Gastrocnemius medialis (tissue), 4 donors: ENCODE measurements at regions of chr18 and their contacts with region 1.

Region 1: GRCh38 chr18:63155169-63155852 is 164.3 kb downstream of the BCL2 start:
- DNase-seq: peak; percentile 58 to 77
- ATAC-seq: peak; percentile 71 to 92
- H3K4me3 ChIP-seq: peak overlapping the region; percentile 15 to 42 (median 31)
- H3K27ac ChIP-seq: peak overlapping the region in 3 of 4 donors; percentile 60 to 82 (median 63)
- H3K4me1 ChIP-seq: peaks cover 27 to 34% of the 10 kb centered on the region in 2 donors
- H3K27me3 ChIP-seq: no peaks in the 10 kb centered on the region
- CTCF ChIP-seq: peak; percentile 76 to 85 (median 80)
- POLR2A ChIP-seq: no peak

Region 2: GRCh38 chr18:62832282-62832681 is 323.0 kb before region 1 on chr18:
- in situ Hi-C with region 1: no loop called
- intact Hi-C with region 1: no loop called
- DNase-seq: no peak
- ATAC-seq: no peak
- H3K4me3 ChIP-seq: no peak overlapping the region
- H3K27ac ChIP-seq: no peak overlapping the region
- H3K4me1 ChIP-seq: peaks cover 0 to 21% of the 10 kb centered on the region in 2 donors
- H3K27me3 ChIP-seq: no peaks in the 10 kb centered on the region
- CTCF ChIP-seq: no peak
- POLR2A ChIP-seq: no peak

Region 3: GRCh38 chr18:63253428-63254372 is 98.4 kb after region 1 on chr18:
- in situ Hi-C with region 1: loop called in 1 of 4 experiments (anchors 10 kb)
- intact Hi-C with region 1: no loop called
- DNase-seq: no peak
- ATAC-seq: peak; percentile 81 to 89
- H3K4me3 ChIP-seq: peak overlapping the region in 3 of 4 donors; percentile 1 to 17 (median 5)
- H3K27ac ChIP-seq: peak overlapping the region; percentile 39 to 73 (median 56)
- H3K4me1 ChIP-seq: peaks cover 25% of the 10 kb centered on the region in 2 donors
- H3K27me3 ChIP-seq: no peaks in the 10 kb centered on the region
- CTCF ChIP-seq: no peak
- POLR2A ChIP-seq: no peak